Heart right ventricle (tissue), 16 donors: ENCODE measurements at regions of chr3 and their contacts with region 1.

Region 1: GRCh38 chr3:29711255-29711771 is 430.4 kb downstream of the RBMS3 start:
- DNase-seq: peak in 1 of 2 donors; percentile 27
- ATAC-seq: peak; percentile 62 to 91 (median 73)
- H3K4me3 ChIP-seq: no peak overlapping the region
- H3K27ac ChIP-seq: peak overlapping the region in 8 of 10 donors; percentile 3 to 62 (median 49)
- H3K4me1 ChIP-seq: peaks cover 4 to 55% (median 29%) of the 10 kb centered on the region in 9 donors
- H3K27me3 ChIP-seq: no peaks in the 10 kb centered on the region
- CTCF ChIP-seq: no peak

Region 2: DNA sequence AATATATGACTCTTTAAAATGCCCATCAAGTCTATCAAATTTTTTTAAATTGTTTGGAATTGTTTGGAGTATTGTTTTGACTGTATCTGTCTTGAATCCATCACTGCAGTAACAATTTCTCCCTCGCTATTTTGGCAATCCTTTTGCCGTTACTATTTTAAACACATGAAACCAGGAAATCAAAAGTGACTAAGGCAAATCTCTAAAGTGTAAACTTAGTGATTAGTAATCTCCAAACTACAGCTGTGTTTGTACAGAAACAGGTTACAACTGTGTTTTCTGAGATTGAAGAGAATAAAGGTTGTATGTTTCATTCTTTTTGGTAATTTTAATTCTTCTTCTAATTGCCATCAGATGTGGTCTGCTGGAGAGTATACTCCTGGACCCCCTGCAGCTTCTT is 34.9 kb after region 1 on chr3:
- intact Hi-C with region 1: loop called in 1 of 10 experiments (anchors 5 kb)
- DNase-seq: no peak
- ATAC-seq: peak in 4 of 8 donors; percentile 42 to 63 (median 48)
- H3K4me3 ChIP-seq: no peak overlapping the region
- H3K27ac ChIP-seq: peak overlapping the region in 5 of 10 donors; percentile 0 to 53 (median 37)
- H3K4me1 ChIP-seq: peaks cover 0 to 53% (median 22%) of the 10 kb centered on the region in 9 donors
- H3K27me3 ChIP-seq: no peaks in the 10 kb centered on the region
- CTCF ChIP-seq: no peak